ENCODE measurements at regions of chr17 and their contacts with region 1.

Region 1: DNA sequence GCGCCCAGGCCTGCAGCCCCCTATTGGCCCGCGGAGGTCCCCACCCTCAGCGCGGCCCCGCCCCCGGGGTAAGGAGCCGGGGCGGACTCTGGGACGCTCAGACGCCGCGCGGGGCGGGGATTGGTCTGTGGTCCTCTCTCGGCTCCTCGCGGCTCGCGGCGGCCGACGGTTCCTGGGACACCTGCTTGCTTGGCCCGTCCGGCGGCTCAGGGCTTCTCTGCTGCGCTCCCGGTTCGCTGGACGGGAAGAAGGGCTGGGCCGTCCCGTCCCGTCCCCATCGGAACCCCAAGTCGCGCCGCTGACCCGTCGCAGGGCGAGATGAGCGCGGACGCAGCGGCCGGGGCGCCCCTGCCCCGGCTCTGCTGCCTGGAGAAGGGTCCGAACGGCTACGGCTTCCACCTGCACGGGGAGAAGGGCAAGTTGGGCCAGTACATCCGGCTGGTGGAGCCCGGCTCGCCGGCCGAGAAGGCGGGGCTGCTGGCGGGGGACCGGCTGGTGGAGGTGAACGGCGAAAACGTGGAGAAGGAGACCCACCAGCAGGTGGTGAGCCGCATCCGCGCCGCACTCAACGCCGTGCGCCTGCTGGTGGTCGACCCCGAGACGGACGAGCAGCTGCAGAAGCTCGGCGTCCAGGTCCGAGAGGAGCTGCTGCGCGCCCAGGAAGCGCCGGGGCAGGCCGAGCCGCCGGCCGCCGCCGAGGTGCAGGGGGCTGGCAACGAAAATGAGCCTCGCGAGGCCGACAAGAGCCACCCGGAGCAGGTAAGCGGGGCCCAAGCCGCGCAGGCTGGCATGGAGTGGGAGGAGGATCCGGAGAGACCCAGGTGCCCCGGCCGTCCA is at the start of gene NHERF1:
- DNase-seq: peak; percentile 93 to 96
- ATAC-seq: peak; percentile 93 to 98 (median 96)
- H3K4me3 ChIP-seq: peak within 1 kb of the TSS; percentile 68 to 95 (median 88)
- H3K27ac ChIP-seq: peak within 1 kb of the TSS; percentile 37 to 92 (median 82)
- H3K4me1 ChIP-seq: peaks cover 7 to 84% (median 49%) of the 10 kb centered on the region in 9 donors
- H3K27me3 ChIP-seq: no peaks in the 10 kb centered on the region
- CTCF ChIP-seq: peak in 3 of 9 donors; percentile 19 to 37 (median 25)
- total RNA-seq, gene NHERF1: 6.7 to 33.4 (median 12.7) TPM

Region 2: GRCh38 chr17:74659898-74660297 is 88.8 kb before region 1 on chr17:
- intact Hi-C with region 1: loop called in 1 of 10 experiments (anchors 5 kb)
- DNase-seq: no peak
- ATAC-seq: no peak
- H3K4me3 ChIP-seq: no peak overlapping the region
- H3K27ac ChIP-seq: no peak overlapping the region
- H3K4me1 ChIP-seq: peaks cover 0 to 4% (median 0%) of the 10 kb centered on the region in 9 donors
- H3K27me3 ChIP-seq: peaks cover 5 to 85% (median 49%) of the 10 kb centered on the region in 7 donors
- CTCF ChIP-seq: no peak

Region 3: GRCh38 chr17:74770498-74771318 is 22.0 kb after region 1 on chr17:
- intact Hi-C with region 1: loop called in 8 of 10 experiments (anchors 1 to 2 kb)
- DNase-seq: peak; percentile 56 to 75
- ATAC-seq: peak; percentile 41 to 74 (median 62)
- H3K4me3 ChIP-seq: no peak overlapping the region
- H3K27ac ChIP-seq: no peak overlapping the region
- H3K4me1 ChIP-seq: peaks cover 12 to 60% (median 39%) of the 10 kb centered on the region in 9 donors
- H3K27me3 ChIP-seq: no peaks in the 10 kb centered on the region
- CTCF ChIP-seq: peak; percentile 66 to 85 (median 81)

Region 4: GRCh38 chr17:74780443-74781238 is 31.9 kb after region 1 on chr17:
- intact Hi-C with region 1: loop called in 3 of 10 experiments (anchors 5 kb)
- DNase-seq: no peak
- ATAC-seq: no peak
- H3K4me3 ChIP-seq: no peak overlapping the region
- H3K27ac ChIP-seq: peak overlapping the region in 1 of 10 donors; percentile 87
- H3K4me1 ChIP-seq: peaks cover 0 to 58% (median 11%) of the 10 kb centered on the region in 9 donors
- H3K27me3 ChIP-seq: no peaks in the 10 kb centered on the region
- CTCF ChIP-seq: peak in 4 of 9 donors; percentile 24 to 40 (median 26)

Region 5: DNA sequence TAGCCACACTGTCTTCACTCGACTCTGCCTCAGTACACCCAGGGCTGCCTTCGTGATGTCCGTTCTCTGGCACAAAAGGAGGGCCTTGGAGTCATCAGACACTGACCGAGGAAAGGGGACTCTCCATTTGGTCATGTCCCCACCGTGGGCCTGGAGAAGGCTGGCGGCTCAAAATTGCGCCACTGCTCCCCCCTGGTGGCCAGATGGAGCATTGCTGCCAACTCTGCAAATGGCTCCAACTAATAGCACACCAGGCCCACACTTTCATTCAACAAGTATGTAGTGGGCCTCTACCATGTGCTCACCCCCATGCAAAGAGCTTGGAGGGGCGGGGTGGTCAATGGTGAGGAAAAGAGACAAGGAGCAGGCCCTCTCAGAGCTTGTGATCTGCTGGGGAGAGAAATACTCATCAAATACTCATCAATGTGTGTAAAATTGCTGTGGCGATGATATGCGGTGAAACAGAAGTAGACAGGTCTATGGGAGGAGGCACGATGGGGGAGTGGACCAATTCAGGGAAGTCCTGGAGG is 116.2 kb after region 1 on chr17:
- intact Hi-C with region 1: loop called in 9 of 10 experiments (anchors 1 to 10 kb)
- DNase-seq: peak; percentile 71 to 79
- ATAC-seq: peak; percentile 18 to 78 (median 64)
- H3K4me3 ChIP-seq: no peak overlapping the region
- H3K27ac ChIP-seq: no peak overlapping the region
- H3K4me1 ChIP-seq: peaks cover 9 to 33% (median 23%) of the 10 kb centered on the region in 9 donors
- H3K27me3 ChIP-seq: peaks cover 13 to 28% (median 23%) of the 10 kb centered on the region in 7 donors
- CTCF ChIP-seq: peak; percentile 87 to 98 (median 96)

Region 6: GRCh38 chr17:75012346-75013091 is 263.8 kb after region 1 on chr17 and contains the start of gene MRPL58:
- intact Hi-C with region 1: no loop called
- DNase-seq: peak; percentile 84 to 85
- ATAC-seq: peak; percentile 90 to 94 (median 92)
- H3K4me3 ChIP-seq: peak within 1 kb of the TSS; percentile 73 to 97 (median 90)
- H3K27ac ChIP-seq: peak within 1 kb of the TSS; percentile 87 to 96 (median 92)
- H3K4me1 ChIP-seq: peaks cover 12 to 35% (median 28%) of the 10 kb centered on the region in 9 donors
- H3K27me3 ChIP-seq: no peaks in the 10 kb centered on the region
- CTCF ChIP-seq: peak in 8 of 9 donors; percentile 28 to 72 (median 59)
- total RNA-seq, gene MRPL58: 43.7 to 64.1 (median 51.7) TPM